Motor neuron (in vitro differentiated cells): ENCODE measurements at regions of chr9 and their contacts with region 1.

Region 1: GRCh38 chr9:12054235-12054634 is 639.0 kb upstream of the TYRP1 start:
- ATAC-seq: no peak
- H3K4me3 ChIP-seq: no peak overlapping the region
- H3K27ac ChIP-seq: no peak overlapping the region
- H3K4me1 ChIP-seq: no peaks in the 10 kb centered on the region

Region 2: DNA sequence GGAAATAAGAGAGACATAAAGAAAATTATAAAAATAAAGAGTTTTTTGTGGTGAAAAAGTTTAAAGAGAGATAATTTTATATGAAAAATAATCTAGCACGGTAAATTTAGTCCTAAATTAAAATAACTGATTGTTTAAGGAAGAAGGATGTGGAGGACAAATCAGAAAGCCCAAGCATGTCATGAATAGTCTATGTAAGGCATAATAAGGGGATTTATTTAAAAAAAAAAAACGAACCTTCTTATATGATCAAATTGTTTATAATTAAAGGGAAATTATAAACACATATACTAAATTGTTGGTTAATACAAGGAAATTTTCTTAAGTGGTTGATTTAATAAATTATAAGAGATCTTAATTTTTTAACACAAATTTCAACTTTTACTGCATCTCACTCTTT is 87.2 kb after region 1 on chr9:
- in situ Hi-C with region 1: loop called in 1 of 9 experiments (anchors 25 kb)
- ATAC-seq: no peak
- H3K4me3 ChIP-seq: no peak overlapping the region
- H3K27ac ChIP-seq: no peak overlapping the region
- H3K4me1 ChIP-seq: no peaks in the 10 kb centered on the region